ENCODE measurements at regions of chr16 and their contacts with region 1.

Region 1: DNA sequence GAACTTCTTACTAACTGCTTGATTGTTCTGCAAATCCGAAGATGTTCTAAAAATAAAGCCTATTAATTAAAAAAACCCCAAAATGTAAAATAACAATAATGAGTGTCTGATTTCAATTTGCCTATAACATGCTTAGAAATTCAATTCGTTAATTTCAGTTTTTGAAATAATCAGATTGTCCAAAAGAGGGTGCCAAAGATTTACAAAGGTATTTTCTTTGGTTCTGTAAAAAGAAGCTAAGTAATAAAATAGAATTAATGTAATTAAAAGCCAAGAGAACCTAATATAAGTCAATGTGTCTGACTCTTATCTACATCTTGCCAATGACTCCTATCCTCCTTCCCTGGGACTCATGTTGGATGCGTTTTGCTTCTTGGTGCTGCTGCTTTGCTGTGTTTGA is 75.0 kb upstream of the CPHXL start:
- DNase-seq: no peak
- H3K4me3 ChIP-seq: no peak overlapping the region
- H3K27ac ChIP-seq: no peak overlapping the region
- H3K4me1 ChIP-seq: no peaks in the 10 kb centered on the region
- H3K27me3 ChIP-seq: no peaks in the 10 kb centered on the region
- CTCF ChIP-seq: peak; percentile 35 to 46

Region 2: GRCh38 chr16:75996521-75996920 is 195.2 kb after region 1 on chr16:
- CTCF ChIA-PET with region 1: no interaction called
- dilution Hi-C with region 1: no loop called
- in situ Hi-C with region 1: no loop called
- intact Hi-C with region 1: loop called (anchors 5 kb)
- DNase-seq: peak; percentile 100
- H3K4me3 ChIP-seq: no peak overlapping the region
- H3K27ac ChIP-seq: peak overlapping the region; percentile 88
- H3K4me1 ChIP-seq: peaks cover 21% of the 10 kb centered on the region
- H3K27me3 ChIP-seq: no peaks in the 10 kb centered on the region
- CTCF ChIP-seq: no peak

Region 3: DNA sequence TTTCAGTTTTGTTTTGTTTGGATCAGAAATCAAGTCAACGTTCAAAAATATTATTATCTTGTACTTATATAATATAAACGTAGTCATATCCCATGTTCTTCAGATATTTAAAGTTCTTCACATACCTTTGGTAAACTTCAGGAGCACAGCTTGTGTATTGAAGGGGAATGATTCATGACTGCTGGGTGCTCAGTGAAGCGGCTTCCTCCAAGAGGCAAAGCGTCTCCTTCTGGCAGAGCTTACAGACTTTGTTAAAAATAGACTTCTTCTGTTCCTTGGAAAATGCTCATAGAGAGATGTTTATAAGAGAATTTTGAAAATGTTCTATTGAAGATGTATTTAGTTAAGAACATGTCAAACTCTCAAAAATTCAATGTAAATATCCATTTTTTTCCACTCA is 320.3 kb after region 1 on chr16:
- CTCF ChIA-PET with region 1: no interaction called
- dilution Hi-C with region 1: no loop called
- in situ Hi-C with region 1: no loop called
- intact Hi-C with region 1: loop called (anchors 10 kb)
- DNase-seq: no peak
- H3K4me3 ChIP-seq: no peak overlapping the region
- H3K27ac ChIP-seq: no peak overlapping the region
- H3K4me1 ChIP-seq: peaks cover 11% of the 10 kb centered on the region
- H3K27me3 ChIP-seq: no peaks in the 10 kb centered on the region
- CTCF ChIP-seq: no peak

Region 4: DNA sequence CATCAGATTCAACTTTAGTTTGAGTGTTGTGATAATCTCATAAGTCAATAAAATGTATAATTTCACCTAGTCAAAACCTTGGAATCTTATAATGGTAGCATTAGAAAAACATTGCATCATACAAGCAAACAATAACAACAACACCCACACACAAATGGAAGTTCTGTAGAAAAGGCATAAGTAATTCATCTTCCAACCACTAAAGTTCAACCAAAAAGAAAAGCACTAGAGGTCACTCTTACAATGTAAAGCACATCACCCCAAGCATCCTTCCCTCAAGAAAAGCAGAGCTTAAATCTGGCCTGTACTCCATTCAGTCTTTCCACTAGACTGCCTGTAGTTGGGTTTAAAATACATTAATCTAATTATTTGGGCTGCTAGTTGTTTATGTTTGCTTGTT is 477.7 kb after region 1 on chr16:
- CTCF ChIA-PET with region 1: no interaction called
- dilution Hi-C with region 1: no loop called
- in situ Hi-C with region 1: no loop called
- intact Hi-C with region 1: loop called (anchors 10 kb)
- DNase-seq: peak; percentile 7
- H3K4me3 ChIP-seq: no peak overlapping the region
- H3K27ac ChIP-seq: no peak overlapping the region
- H3K4me1 ChIP-seq: no peaks in the 10 kb centered on the region
- H3K27me3 ChIP-seq: peaks cover 4% of the 10 kb centered on the region
- CTCF ChIP-seq: peak; percentile 7 to 42

Region 5: DNA sequence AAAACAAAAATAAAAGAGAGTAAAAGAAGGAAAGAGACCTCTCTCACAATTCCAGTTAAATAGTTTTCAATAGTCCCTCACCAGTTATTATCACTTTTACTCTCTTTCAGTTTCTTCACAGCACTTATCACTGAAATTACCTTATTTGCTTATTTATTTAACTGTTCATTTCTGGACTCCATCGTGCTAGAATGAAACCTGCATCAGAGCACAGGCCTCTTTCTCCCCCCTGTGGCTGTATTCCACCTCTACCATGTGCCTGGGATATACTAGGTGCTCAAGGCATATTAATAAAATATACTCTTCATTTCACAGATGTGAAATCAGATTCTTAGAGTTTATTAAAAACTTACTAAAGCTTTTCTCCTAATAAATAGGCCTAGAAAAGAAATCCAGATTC is 1080.8 kb after region 1 on chr16:
- CTCF ChIA-PET with region 1: no interaction called
- dilution Hi-C with region 1: no loop called
- in situ Hi-C with region 1: no loop called
- intact Hi-C with region 1: loop called (anchors 5 kb)
- DNase-seq: no peak
- H3K4me3 ChIP-seq: no peak overlapping the region
- H3K27ac ChIP-seq: no peak overlapping the region
- H3K4me1 ChIP-seq: no peaks in the 10 kb centered on the region
- H3K27me3 ChIP-seq: no peaks in the 10 kb centered on the region
- CTCF ChIP-seq: peak; percentile 33 to 54

Measured in mammary epithelial cell (primary cell).